Activated naive CD4-positive, alpha-beta T cell treated with anti-CD3 and anti-CD28 coated beads for 36 hours (primary cell): ENCODE measurements at regions of chr6 and their contacts with region 1.

Region 1: GRCh38 chr6:16712931-16713484 is 48.3 kb downstream of the ATXN1 start:
- DNase-seq: peak; percentile 23
- H3K4me3 Mint-ChIP-seq: peak overlapping the region; percentile 51
- H3K27ac Mint-ChIP-seq: peak overlapping the region; percentile 75
- H3K4me1 Mint-ChIP-seq: peaks cover 29% of the 10 kb centered on the region
- H3K27me3 Mint-ChIP-seq: no peaks in the 10 kb centered on the region

Region 2: DNA sequence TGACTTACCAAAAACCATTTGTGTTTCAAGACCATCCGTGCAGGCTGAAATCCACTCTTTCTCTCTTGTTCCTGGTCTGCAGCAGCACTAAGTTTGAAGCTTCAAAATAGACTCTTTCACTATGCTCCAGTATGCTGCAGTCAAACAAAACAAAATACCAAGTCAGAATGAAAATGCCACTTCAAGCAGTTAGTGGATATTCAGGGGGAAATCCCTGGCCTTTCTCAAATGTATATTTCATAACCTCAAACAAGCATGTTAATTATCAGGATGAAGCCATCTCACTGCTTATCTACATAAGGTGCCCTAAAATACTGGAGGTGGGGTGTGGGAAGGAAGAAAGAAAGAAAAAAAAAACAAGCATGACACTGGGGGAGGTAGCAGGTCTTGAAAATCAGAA is 55.2 kb before region 1 on chr6:
- CTCF ChIA-PET with region 1: no interaction called
- intact Hi-C with region 1: loop called (anchors 1 kb)
- DNase-seq: peak; percentile 9
- H3K4me3 Mint-ChIP-seq: peak overlapping the region; percentile 2
- H3K27ac Mint-ChIP-seq: peak overlapping the region; percentile 32
- H3K4me1 Mint-ChIP-seq: peaks cover 43% of the 10 kb centered on the region
- H3K27me3 Mint-ChIP-seq: no peaks in the 10 kb centered on the region

Region 3: GRCh38 chr6:16723826-16724225 is 10.8 kb after region 1 on chr6:
- CTCF ChIA-PET with region 1: interaction called, 5 read pairs
- intact Hi-C with region 1: loop called (anchors 1 kb)
- DNase-seq: peak; percentile 40
- H3K4me3 Mint-ChIP-seq: no peak overlapping the region
- H3K27ac Mint-ChIP-seq: no peak overlapping the region
- H3K4me1 Mint-ChIP-seq: peaks cover 32% of the 10 kb centered on the region
- H3K27me3 Mint-ChIP-seq: no peaks in the 10 kb centered on the region

Region 4: GRCh38 chr6:16731478-16732051 is 18.6 kb after region 1 on chr6:
- CTCF ChIA-PET with region 1: interaction called, 5 read pairs
- intact Hi-C with region 1: loop called (anchors 2 kb)
- DNase-seq: peak; percentile 40
- H3K4me3 Mint-ChIP-seq: no peak overlapping the region
- H3K27ac Mint-ChIP-seq: no peak overlapping the region
- H3K4me1 Mint-ChIP-seq: peaks cover 35% of the 10 kb centered on the region
- H3K27me3 Mint-ChIP-seq: no peaks in the 10 kb centered on the region

Region 5: GRCh38 chr6:16956361-16956760 is 243.4 kb after region 1 on chr6:
- CTCF ChIA-PET with region 1: interaction called, 5 read pairs
- intact Hi-C with region 1: loop called (anchors 5 kb)
- DNase-seq: peak; percentile 14
- H3K4me3 Mint-ChIP-seq: no peak overlapping the region
- H3K27ac Mint-ChIP-seq: no peak overlapping the region
- H3K4me1 Mint-ChIP-seq: peaks cover 15% of the 10 kb centered on the region
- H3K27me3 Mint-ChIP-seq: peaks cover 19% of the 10 kb centered on the region